ENCODE measurements at regions of chr1 and their contacts with region 1.

Region 1: DNA sequence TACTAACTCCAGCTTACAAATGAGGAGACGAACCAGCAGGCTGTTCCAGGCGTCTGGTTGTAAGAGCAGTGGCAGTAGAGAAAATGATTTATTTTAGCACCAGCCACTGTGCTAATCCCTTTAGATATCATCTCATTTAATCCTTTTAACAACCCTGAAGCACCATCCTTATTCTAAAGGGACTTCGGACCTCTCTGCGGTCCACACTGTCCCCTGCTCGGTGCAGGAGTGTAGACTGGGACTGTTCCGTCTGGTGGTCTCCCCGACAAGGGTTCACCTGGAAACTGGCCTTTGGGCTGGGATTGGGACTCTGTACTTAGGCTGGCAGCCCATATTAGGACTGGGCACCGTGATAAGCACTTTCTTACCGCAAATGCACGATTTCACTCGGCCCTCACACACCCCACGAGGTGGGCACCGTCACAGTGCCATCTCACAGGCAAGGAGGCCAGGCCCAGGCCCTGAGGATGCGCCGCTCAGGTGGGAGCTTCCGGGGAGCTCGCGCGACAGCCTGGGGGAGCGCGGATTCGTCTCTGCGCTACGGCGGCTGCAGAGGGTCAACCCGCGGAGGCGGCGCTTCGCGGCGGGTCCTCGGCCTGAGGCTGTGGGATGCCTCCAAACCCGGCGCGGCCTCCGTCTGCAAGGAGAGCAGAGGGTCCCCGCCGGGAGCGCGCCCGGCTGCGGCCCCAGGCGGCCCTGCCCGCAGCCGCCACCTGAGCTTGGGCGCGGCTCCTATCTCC is 45.2 kb downstream of the ATP1A1 start:
- DNase-seq: peak; percentile 88
- H3K4me3 Mint-ChIP-seq: peak overlapping the region; percentile 87
- H3K27ac Mint-ChIP-seq: peak overlapping the region; percentile 78
- H3K4me1 Mint-ChIP-seq: peaks cover 32% of the 10 kb centered on the region
- H3K27me3 Mint-ChIP-seq: no peaks in the 10 kb centered on the region

Region 2: DNA sequence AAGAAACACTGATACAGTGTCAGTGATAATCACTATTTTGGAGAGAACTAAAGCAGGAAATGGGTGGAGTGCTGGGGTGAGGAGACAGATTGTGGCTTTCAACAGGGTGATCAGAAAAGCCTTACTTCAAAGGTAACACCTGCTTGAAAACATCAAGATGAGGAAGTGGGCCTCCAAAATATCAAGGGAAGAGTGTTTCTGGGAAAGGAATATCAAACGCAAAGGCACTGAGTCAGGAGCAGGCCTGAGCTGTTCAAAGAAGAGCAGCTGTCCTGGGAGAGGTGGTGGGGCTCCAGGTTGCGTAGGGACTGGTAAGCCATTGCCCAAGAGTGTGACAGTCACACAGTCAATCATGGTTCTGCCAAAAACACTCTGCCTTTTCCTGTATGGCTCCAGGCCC is 92.3 kb before region 1 on chr1:
- CTCF ChIA-PET with region 1: interaction called, 3 read pairs
- intact Hi-C with region 1: loop called (anchors 2 kb)
- DNase-seq: peak; percentile 73
- H3K4me3 Mint-ChIP-seq: peak overlapping the region; percentile 19
- H3K27ac Mint-ChIP-seq: peak overlapping the region; percentile 95
- H3K4me1 Mint-ChIP-seq: peaks cover 79% of the 10 kb centered on the region
- H3K27me3 Mint-ChIP-seq: no peaks in the 10 kb centered on the region

Region 3: DNA sequence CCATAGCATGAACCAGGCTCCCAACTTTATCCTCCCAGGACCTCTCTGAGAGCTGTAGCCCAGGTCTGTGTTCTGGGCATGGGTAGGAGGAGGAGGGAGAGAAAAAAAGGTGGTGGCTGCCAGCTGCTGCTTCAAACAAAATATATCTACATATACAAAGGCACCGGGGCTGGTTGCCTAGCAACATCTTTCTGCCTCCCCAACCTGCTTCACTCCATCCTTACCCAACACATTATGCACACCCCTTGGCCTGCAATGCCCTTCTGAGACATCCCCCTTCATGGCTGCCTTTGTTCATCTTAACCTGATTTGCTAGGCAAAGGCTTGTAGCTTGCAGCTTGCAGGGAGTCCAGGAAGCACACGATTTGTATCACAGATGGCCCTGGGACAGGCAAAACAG is 72.4 kb before region 1 on chr1:
- CTCF ChIA-PET with region 1: no interaction called
- intact Hi-C with region 1: no loop called
- DNase-seq: peak; percentile 58
- H3K4me3 Mint-ChIP-seq: no peak overlapping the region
- H3K27ac Mint-ChIP-seq: peak overlapping the region; percentile 22
- H3K4me1 Mint-ChIP-seq: peaks cover 74% of the 10 kb centered on the region
- H3K27me3 Mint-ChIP-seq: no peaks in the 10 kb centered on the region

Region 4: DNA sequence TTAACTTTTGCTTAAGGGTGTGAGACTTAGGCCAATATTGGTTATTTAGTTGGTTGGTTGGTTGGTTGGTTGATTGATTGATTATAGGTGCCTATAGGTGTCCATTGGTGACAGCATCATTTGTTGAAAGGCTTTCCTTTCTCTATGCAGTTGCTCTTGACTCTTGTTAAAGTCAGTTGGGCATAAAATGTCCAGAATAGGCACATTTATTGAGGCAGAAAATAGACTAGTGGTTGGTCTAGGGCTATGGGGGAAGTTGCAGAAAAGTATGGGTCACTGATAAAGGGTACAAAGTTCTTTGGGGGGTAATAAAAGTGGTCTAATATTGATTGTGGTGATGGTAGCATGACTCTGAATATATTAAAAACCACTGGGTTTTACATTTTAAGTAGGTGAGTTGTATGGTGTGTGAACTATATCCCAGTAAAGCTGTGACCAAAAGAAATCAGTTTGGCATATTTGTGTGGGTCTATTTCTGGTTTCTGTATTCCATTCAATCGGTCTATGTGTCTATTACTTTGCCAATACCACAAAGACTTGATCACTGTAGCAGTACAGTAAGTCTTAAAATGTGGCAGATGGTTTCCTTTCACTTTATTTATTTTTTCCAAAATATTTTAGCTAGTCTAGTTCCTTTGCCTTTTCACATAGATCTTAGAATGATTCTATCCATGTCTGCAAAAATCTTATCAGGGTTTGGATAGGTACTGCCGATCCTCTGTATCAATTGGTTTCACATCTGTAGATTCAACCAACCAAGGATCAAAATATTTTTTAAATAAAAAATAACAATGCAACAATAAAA is 17.7 kb after region 1 on chr1:
- CTCF ChIA-PET with region 1: no interaction called
- intact Hi-C with region 1: loop called (anchors 1 kb)
- DNase-seq: no peak
- H3K4me3 Mint-ChIP-seq: no peak overlapping the region
- H3K27ac Mint-ChIP-seq: no peak overlapping the region
- H3K4me1 Mint-ChIP-seq: no peaks in the 10 kb centered on the region
- H3K27me3 Mint-ChIP-seq: no peaks in the 10 kb centered on the region